Panc1 (cell line): ENCODE measurements at regions of chr6 and their contacts with region 1.

Region 1: DNA sequence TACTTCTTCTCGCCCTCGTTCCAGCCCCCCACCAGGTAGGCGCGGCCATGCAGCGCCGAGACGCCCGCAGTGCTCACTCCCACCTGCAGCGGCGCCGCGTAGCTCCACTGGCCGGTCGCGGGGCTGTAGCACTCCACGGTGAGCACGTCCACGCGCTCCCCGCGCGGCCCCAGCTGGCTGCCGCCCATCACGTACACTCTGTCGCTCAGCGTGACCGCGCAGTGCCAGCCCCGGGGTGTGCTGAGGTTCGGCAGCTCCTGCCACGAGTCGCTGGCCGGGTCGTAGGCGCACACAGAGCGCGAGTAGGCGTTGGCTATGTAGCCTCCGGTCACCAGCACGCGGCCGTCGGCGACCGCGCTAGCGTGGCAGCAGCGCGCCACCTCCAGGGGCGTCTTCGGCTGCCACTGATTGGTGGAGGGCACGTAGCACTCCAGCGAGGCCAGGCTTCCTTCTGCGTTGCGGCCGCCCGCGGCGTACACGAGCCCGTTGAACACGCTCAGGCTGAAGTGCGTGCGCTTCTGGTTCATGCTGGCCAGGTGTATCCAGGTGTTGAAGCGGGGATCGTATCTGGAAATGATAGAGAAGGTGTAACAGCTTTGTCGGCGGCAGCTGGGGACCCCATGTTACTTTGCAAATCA is 13.7 kb downstream of the KLHL31 start:
- DNase-seq: peak; percentile 55
- ATAC-seq: peak; percentile 99
- H3K4me3 ChIP-seq: peak overlapping the region; percentile 51 to 86
- H3K27ac ChIP-seq: peak overlapping the region; percentile 32; the same call in 1 of the 2 replicates
- H3K4me1 ChIP-seq: peaks cover 4% of the 10 kb centered on the region; the same call in 1 of the 2 replicates
- H3K27me3 ChIP-seq: no peaks in the 10 kb centered on the region; the same call in 1 of the 2 replicates
- CTCF ChIP-seq: peak; percentile 56

Region 2: DNA sequence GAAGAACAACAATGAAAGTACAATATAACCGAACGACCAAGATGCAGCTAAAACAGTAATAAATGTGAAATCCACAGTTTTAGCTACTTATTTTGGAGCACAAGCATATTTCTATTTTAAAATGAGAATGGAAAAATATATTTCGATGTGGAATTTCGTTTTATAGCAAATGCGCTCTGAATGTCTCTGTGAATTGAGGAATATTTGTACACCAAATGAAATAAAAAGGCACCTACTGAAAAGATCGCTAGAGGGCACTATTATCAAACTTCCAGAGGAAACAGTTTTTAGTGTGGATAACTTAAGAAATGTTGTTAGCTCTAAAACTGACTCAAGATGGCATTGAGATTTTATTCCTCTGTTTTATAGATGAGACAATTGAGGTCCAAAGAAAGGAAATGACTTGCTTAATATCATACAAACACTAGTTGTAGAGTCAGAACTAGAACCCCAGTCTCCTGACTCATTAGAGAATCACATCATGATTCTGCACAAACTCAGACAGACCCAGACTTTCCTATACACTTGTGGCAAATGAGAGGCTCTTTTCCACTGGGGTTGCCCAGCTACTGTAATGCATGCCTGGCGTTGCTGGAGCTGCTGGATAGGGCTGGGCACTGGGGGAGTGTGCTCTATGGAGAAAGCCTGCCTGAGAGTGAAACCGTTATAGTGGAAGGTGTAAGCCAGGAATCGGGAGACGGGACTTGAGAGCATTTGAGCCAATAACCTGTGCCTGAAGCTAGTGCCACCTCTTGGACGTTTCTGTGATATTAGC is 158.8 kb before region 1 on chr6:
- CTCF ChIA-PET with region 1: interaction called, 15 read pairs
- POLR2A ChIA-PET with region 1: no interaction called
- in situ Hi-C with region 1: no loop called
- intact Hi-C with region 1: loop called (anchors 1 kb)
- DNase-seq: peak; percentile 58
- ATAC-seq: peak; percentile 92
- H3K4me3 ChIP-seq: peak overlapping the region; percentile 24 to 44
- H3K27ac ChIP-seq: peak overlapping the region; percentile 44; the same call in 1 of the 2 replicates
- H3K4me1 ChIP-seq: peaks cover 4% of the 10 kb centered on the region; the same call in 1 of the 2 replicates
- H3K27me3 ChIP-seq: no peaks in the 10 kb centered on the region
- CTCF ChIP-seq: peak; percentile 78

Region 3: GRCh38 chr6:53544470-53545308 is 107.2 kb before region 1 on chr6 and contains the start of gene GCLC:
- CTCF ChIA-PET with region 1: no interaction called
- POLR2A ChIA-PET with region 1: no interaction called
- in situ Hi-C with region 1: no loop called
- intact Hi-C with region 1: loop called (anchors 2 kb)
- DNase-seq: peak; percentile 79
- ATAC-seq: peak; percentile 87
- H3K4me3 ChIP-seq: peak within 1 kb of the TSS; percentile 67 to 91
- H3K27ac ChIP-seq: peak within 1 kb of the TSS; percentile 60
- H3K4me1 ChIP-seq: peaks cover 16% of the 10 kb centered on the region
- H3K27me3 ChIP-seq: no peaks in the 10 kb centered on the region
- CTCF ChIP-seq: peak; percentile 94
- total RNA-seq, gene GCLC: 37.2 TPM

Region 4: DNA sequence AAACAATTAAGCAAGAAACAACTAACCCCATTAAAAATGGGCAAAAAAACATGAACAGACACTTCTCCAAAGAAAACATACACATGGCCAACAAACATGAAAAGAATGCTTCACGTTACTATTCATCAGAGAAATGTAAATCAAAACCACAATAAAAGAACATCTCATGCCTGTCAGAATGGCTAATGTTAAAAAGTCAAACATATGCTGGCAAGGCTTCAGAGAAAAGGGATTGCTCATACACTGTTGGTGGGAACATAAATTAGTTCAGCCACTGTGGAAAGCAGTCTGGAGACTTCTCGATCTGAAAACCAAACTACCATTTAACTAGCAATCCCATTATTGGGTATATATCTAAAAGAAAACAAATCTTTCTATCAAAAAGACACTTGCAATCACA is 873.8 kb after region 1 on chr6:
- CTCF ChIA-PET with region 1: no interaction called
- POLR2A ChIA-PET with region 1: no interaction called
- in situ Hi-C with region 1: no loop called
- intact Hi-C with region 1: no loop called
- DNase-seq: no peak
- ATAC-seq: no peak
- H3K4me3 ChIP-seq: no peak overlapping the region
- H3K27ac ChIP-seq: no peak overlapping the region
- H3K4me1 ChIP-seq: no peaks in the 10 kb centered on the region
- H3K27me3 ChIP-seq: no peaks in the 10 kb centered on the region
- CTCF ChIP-seq: no peak